ENCODE measurements at regions of chr6 and their contacts with region 1.

Region 1: GRCh38 chr6:31769684-31770371 is 7.3 kb downstream of the VWA7 start:
- DNase-seq: peak; percentile 93
- ATAC-seq: peak; percentile 66
- H3K4me3 Mint-ChIP-seq: no peak overlapping the region
- H3K27ac Mint-ChIP-seq: no peak overlapping the region
- H3K4me1 Mint-ChIP-seq: peaks cover 14% of the 10 kb centered on the region
- H3K27me3 Mint-ChIP-seq: no peaks in the 10 kb centered on the region; the same call in 1 of the 2 replicates
- CTCF ChIP-seq: peak; percentile 90

Region 2: GRCh38 chr6:30075161-30075986 is 1694.5 kb before region 1 on chr6 and contains the start of gene RNF39:
- CTCF ChIA-PET with region 1: no interaction called
- POLR2A ChIA-PET with region 1: no interaction called
- DNase-seq: peak; percentile 83
- ATAC-seq: peak; percentile 68
- H3K4me3 Mint-ChIP-seq: peak within 1 kb of the TSS; percentile 96
- H3K27ac Mint-ChIP-seq: peak within 1 kb of the TSS; percentile 47
- H3K4me1 Mint-ChIP-seq: peaks cover 32% of the 10 kb centered on the region
- H3K27me3 Mint-ChIP-seq: peaks cover 94% of the 10 kb centered on the region
- CTCF ChIP-seq: peak; percentile 73
- total RNA-seq, gene RNF39: 4.2 to 5.1 TPM (median 4.5 TPM) in 3 replicates

Region 3: DNA sequence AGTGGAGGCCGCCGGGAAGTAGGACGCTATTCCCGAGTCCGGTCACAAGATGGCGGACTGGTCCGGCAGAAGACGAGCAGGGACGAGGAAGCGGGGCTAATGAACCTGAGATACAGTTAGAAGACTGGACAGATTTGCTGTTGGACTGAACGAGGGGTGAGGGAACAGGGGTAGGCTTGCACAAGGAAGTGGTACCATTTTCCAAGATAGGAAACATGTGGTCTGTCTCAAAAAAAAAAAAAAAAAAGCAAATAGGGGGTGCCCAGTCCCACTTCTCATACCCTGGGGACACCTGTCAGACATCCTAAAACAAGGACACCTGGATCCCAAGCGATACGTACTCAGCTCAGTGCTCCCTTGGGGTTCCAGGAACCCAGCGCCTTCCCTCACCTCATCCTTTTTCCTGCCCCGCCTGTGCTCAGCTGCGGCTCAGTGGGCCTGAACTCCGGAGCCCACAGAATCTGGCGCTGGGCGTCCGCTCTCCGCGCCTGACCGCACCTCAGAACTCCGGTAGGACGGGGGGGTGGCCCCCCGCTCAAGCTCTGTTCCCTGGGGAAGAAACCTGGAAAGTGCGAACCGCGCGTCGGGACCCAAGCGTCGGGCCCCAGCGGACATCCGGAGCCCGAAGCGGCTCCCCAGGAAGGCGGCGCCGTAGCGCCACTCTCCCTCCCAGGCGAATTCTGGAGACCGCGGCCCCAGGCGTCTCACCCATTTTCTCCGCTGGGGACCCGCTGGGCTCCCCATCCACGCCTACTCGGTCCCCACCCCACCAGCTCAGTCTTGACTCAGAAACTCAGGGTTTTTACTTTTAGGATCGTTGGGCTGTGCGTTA is 88.8 kb before region 1 on chr6 and contains the start of gene LY6G5C:
- CTCF ChIA-PET with region 1: interaction called, 26 read pairs
- POLR2A ChIA-PET with region 1: interaction called, 5 read pairs
- DNase-seq: peak; percentile 77
- ATAC-seq: peak; percentile 39
- H3K4me3 Mint-ChIP-seq: peak within 1 kb of the TSS; percentile 89
- H3K27ac Mint-ChIP-seq: no peak within 1 kb of the TSS
- H3K4me1 Mint-ChIP-seq: peaks cover 16% of the 10 kb centered on the region
- H3K27me3 Mint-ChIP-seq: peaks cover 24% of the 10 kb centered on the region
- CTCF ChIP-seq: peak; percentile 6; the same call in 1 of the 2 replicates
- total RNA-seq, gene LY6G5C: 0.98 to 1.6 TPM (median 1.0 TPM) in 3 replicates

Region 4: GRCh38 chr6:31723245-31723979 is 46.4 kb before region 1 on chr6 and contains the start of gene MPIG6B:
- CTCF ChIA-PET with region 1: interaction called, 66 read pairs
- POLR2A ChIA-PET with region 1: no interaction called
- DNase-seq: no peak
- ATAC-seq: no peak; the same call in 1 of the 2 replicates
- H3K4me3 Mint-ChIP-seq: no peak within 1 kb of the TSS
- H3K27ac Mint-ChIP-seq: 0 out of 2 replicates have a peak within 1 kb of the TSS, but pooled peaks have one; percentile 42
- H3K4me1 Mint-ChIP-seq: peaks cover 7% of the 10 kb centered on the region
- H3K27me3 Mint-ChIP-seq: peaks cover 4% of the 10 kb centered on the region; the same call in 1 of the 2 replicates
- CTCF ChIP-seq: no peak
- total RNA-seq, gene MPIG6B: 0.09 to 0.11 TPM (median 0.11 TPM) in 3 replicates

Region 5: GRCh38 chr6:31752739-31753319 is 17.0 kb before region 1 on chr6:
- CTCF ChIA-PET with region 1: interaction called, 14 read pairs
- POLR2A ChIA-PET with region 1: no interaction called
- DNase-seq: no peak
- ATAC-seq: no peak
- H3K4me3 Mint-ChIP-seq: no peak overlapping the region
- H3K27ac Mint-ChIP-seq: peak overlapping the region; percentile 12; the same call in 1 of the 2 replicates
- H3K4me1 Mint-ChIP-seq: no peaks in the 10 kb centered on the region
- H3K27me3 Mint-ChIP-seq: no peaks in the 10 kb centered on the region
- CTCF ChIP-seq: no peak

Region 6: GRCh38 chr6:31806465-31807272 is 36.8 kb after region 1 on chr6 and contains the start of gene LSM2:
- CTCF ChIA-PET with region 1: interaction called, 12 read pairs
- POLR2A ChIA-PET with region 1: no interaction called
- DNase-seq: peak; percentile 98
- ATAC-seq: peak; percentile 95
- H3K4me3 Mint-ChIP-seq: peak within 1 kb of the TSS; percentile 99
- H3K27ac Mint-ChIP-seq: peak within 1 kb of the TSS; percentile 99
- H3K4me1 Mint-ChIP-seq: peaks cover 9% of the 10 kb centered on the region
- H3K27me3 Mint-ChIP-seq: no peaks in the 10 kb centered on the region; the same call in 1 of the 2 replicates
- CTCF ChIP-seq: no peak
- total RNA-seq, gene LSM2: 104 to 121 TPM (median 119 TPM) in 3 replicates

Region 7: GRCh38 chr6:31862344-31863227 is 92.8 kb after region 1 on chr6 and contains the start of gene NEU1:
- CTCF ChIA-PET with region 1: interaction called, 14 read pairs
- POLR2A ChIA-PET with region 1: no interaction called
- DNase-seq: peak; percentile 99
- ATAC-seq: peak; percentile 93
- H3K4me3 Mint-ChIP-seq: peak within 1 kb of the TSS; percentile 97
- H3K27ac Mint-ChIP-seq: peak within 1 kb of the TSS; percentile 99
- H3K4me1 Mint-ChIP-seq: peaks cover 19% of the 10 kb centered on the region
- H3K27me3 Mint-ChIP-seq: peaks cover 2% of the 10 kb centered on the region; the same call in 1 of the 2 replicates
- CTCF ChIP-seq: no peak
- total RNA-seq, gene NEU1: 42.6 to 44.8 TPM (median 42.8 TPM) in 3 replicates

Region 8: DNA sequence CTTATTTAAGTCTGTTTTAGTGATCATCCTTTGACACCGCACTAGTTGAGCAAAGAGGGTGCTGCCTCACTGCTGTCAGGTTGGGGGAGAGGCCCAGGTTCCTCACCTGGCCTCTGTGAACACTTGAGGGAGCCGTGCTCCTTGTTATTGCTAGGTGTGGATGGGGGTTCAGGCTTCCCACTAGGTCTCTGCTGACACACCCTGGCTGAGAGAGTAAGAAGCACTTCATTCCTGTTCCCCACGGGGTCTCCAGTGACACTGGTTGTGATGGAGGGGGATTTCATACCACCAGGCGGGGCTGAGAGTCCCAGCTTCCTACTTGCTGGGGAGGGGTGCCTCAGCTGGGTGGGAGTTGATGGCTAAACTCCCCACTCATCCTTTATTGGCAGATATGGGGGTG is 465.1 kb after region 1 on chr6:
- CTCF ChIA-PET with region 1: no interaction called
- POLR2A ChIA-PET with region 1: no interaction called
- DNase-seq: peak; percentile 36
- ATAC-seq: peak; percentile 92
- H3K4me3 Mint-ChIP-seq: no peak overlapping the region
- H3K27ac Mint-ChIP-seq: no peak overlapping the region
- H3K4me1 Mint-ChIP-seq: no peaks in the 10 kb centered on the region
- H3K27me3 Mint-ChIP-seq: no peaks in the 10 kb centered on the region; the same call in 1 of the 2 replicates
- CTCF ChIP-seq: no peak

Measured in WTC11 (cell line).